BJ (cell line): ENCODE measurements at regions of chr6 and their contacts with region 1.

Region 1: DNA sequence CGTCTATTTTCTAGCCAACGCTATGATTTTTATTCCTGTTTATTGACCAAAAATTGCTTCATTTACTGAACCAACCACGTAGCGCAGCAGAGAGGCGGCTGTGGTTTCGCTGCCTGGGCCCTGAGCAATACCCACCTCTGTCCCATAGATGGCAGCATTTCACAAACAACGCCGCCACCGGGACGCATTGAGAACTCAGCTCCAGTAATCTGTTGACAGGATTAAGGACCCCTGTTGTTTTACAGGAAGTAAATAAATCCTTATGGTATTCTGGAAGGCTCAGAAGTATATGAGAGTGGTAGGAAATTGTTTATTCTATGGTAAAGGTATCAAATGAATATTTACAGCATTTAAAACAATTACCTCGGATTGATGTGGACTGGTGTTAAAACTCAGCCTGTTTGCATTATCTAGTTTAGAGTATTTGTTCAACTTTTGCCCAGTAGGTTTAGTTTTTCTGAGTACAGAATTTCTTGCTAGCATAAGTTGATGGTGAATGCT is 547.9 kb upstream of the SLC35B3 start:
- DNase-seq: peak; percentile 12
- H3K4me3 ChIP-seq: 0 out of 2 replicates have a peak overlapping the region, but pooled peaks have one; percentile 14
- H3K27me3 ChIP-seq: no peaks in the 10 kb centered on the region
- CTCF ChIP-seq: peak; percentile 95

Region 2: DNA sequence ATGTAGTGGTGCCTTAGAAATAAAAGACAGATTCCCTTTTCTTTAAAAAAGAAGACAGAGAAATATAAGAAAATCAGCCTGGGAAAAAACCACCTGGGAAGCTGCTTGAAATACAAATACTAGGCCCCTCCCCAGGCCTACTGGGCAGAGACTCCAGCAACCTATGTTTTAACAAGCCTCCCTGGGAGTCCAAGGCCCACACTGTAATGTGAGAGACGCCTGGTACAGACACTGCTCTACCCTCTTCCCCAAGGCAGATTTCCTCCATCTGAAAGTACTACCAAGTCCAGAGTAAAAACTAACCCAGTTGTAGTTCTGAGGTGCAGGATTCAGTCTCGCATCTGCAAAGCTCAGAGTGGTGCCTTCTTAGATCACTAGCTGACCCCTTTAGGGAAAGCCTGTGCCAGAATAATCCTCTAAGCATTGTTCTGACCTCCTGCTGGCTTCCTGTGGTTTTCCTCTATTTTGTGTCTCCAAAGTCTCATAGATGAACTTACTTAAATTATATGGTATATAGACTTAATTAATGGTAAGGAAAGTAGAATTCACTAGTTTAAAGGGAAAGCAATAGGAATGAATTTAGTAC is 277.7 kb before region 1 on chr6:
- CTCF ChIA-PET with region 1: no interaction called
- POLR2A ChIA-PET with region 1: no interaction called
- DNase-seq: no peak
- H3K4me3 ChIP-seq: no peak overlapping the region
- H3K27me3 ChIP-seq: no peaks in the 10 kb centered on the region
- CTCF ChIP-seq: no peak

Region 3: GRCh38 chr6:10429638-10430427 is 1446.6 kb after region 1 on chr6:
- CTCF ChIA-PET with region 1: interaction called, 25 read pairs
- POLR2A ChIA-PET with region 1: no interaction called
- DNase-seq: no peak
- H3K4me3 ChIP-seq: peak overlapping the region; percentile 3; the same call in 1 of the 2 replicates
- H3K27me3 ChIP-seq: no peaks in the 10 kb centered on the region
- CTCF ChIP-seq: peak; percentile 53